Activated CD4-positive, alpha-beta T cell treated with anti-CD3 and anti-CD28 coated beads for 36 hours (primary cell): ENCODE measurements at regions of chr15 and their contacts with region 1.

Region 1: GRCh38 chr15:63504247-63504978 is at the start of gene USP3:
- DNase-seq: peak; percentile 96
- ATAC-seq: peak; percentile 53
- H3K4me3 Mint-ChIP-seq: peak within 1 kb of the TSS; percentile 94
- H3K27ac Mint-ChIP-seq: peak within 1 kb of the TSS; percentile 97
- H3K4me1 Mint-ChIP-seq: peaks cover 74% of the 10 kb centered on the region
- H3K27me3 Mint-ChIP-seq: no peaks in the 10 kb centered on the region
- total RNA-seq, gene USP3: 51.1 to 51.7 TPM

Region 2: GRCh38 chr15:63212050-63213004 is 292.1 kb before region 1 on chr15:
- CTCF ChIA-PET with region 1: no interaction called
- POLR2A ChIA-PET with region 1: no interaction called
- intact Hi-C with region 1: loop called (anchors 1 to 10 kb)
- DNase-seq: peak; percentile 44
- ATAC-seq: peak; percentile 70
- H3K4me3 Mint-ChIP-seq: peak overlapping the region; percentile 53
- H3K27ac Mint-ChIP-seq: peak overlapping the region; percentile 98
- H3K4me1 Mint-ChIP-seq: peaks cover 91% of the 10 kb centered on the region
- H3K27me3 Mint-ChIP-seq: no peaks in the 10 kb centered on the region

Region 3: DNA sequence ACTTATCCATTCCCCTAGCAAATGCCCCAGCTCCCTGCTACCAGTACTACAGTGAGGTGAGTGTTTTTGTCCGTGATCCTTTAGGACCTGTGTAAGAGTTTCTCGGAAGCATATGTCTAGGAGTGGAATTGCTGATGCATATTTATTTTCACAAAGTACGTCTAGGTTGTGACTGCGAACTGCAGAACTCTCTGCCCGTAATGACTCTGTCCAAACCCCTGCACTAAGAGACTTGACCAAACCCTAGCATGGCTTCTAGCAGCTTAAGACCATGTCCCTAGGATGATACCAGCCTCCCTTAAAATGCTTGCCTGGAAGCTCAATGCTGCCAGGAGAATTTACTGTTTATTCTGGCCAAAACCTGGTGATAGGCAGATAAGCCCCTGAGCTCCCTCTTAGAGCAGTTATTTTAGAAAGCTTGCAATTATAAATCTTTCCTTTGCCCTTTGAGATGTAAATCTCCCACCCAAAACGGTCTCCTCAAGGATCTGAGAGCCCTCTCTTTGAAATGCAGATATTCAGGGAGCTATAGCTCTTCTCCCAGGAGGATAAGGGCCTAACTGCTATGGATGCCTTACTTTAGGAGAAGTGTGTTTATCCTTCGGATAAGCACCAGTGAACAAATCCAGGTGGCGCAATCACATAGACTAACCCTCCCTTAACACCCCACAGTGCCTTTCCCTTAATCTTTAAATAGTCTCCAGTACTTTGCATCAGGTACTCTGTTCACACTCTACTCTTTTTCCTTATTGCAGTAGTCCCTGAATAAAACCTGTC is 108.1 kb before region 1 on chr15:
- CTCF ChIA-PET with region 1: no interaction called
- POLR2A ChIA-PET with region 1: no interaction called
- intact Hi-C with region 1: no loop called
- DNase-seq: no peak
- ATAC-seq: no peak
- H3K4me3 Mint-ChIP-seq: no peak overlapping the region
- H3K27ac Mint-ChIP-seq: no peak overlapping the region
- H3K4me1 Mint-ChIP-seq: peaks cover 32% of the 10 kb centered on the region
- H3K27me3 Mint-ChIP-seq: peaks cover 25% of the 10 kb centered on the region

Region 4: GRCh38 chr15:63473999-63474809 is 30.2 kb before region 1 on chr15:
- CTCF ChIA-PET with region 1: interaction called, 78 read pairs
- POLR2A ChIA-PET with region 1: interaction called, 5 read pairs
- intact Hi-C with region 1: loop called (anchors 1 kb)
- DNase-seq: peak; percentile 84
- ATAC-seq: peak; percentile 79
- H3K4me3 Mint-ChIP-seq: peak overlapping the region; percentile 9
- H3K27ac Mint-ChIP-seq: peak overlapping the region; percentile 94
- H3K4me1 Mint-ChIP-seq: peaks cover 59% of the 10 kb centered on the region
- H3K27me3 Mint-ChIP-seq: no peaks in the 10 kb centered on the region

Region 5: GRCh38 chr15:63522225-63522578 is 17.8 kb after region 1 on chr15:
- CTCF ChIA-PET with region 1: interaction called, 10 read pairs
- POLR2A ChIA-PET with region 1: interaction called, 4 read pairs
- intact Hi-C with region 1: no loop called
- DNase-seq: no peak
- ATAC-seq: no peak
- H3K4me3 Mint-ChIP-seq: no peak overlapping the region
- H3K27ac Mint-ChIP-seq: no peak overlapping the region
- H3K4me1 Mint-ChIP-seq: peaks cover 94% of the 10 kb centered on the region
- H3K27me3 Mint-ChIP-seq: no peaks in the 10 kb centered on the region

Region 6: GRCh38 chr15:63600616-63601025 is 96.2 kb after region 1 on chr15:
- CTCF ChIA-PET with region 1: interaction called, 9 read pairs
- POLR2A ChIA-PET with region 1: interaction called, 15 read pairs
- intact Hi-C with region 1: loop called (anchors 1 to 2 kb)
- DNase-seq: peak; percentile 95
- ATAC-seq: peak; percentile 74
- H3K4me3 Mint-ChIP-seq: peak overlapping the region; percentile 88
- H3K27ac Mint-ChIP-seq: peak overlapping the region; percentile 96
- H3K4me1 Mint-ChIP-seq: peaks cover 54% of the 10 kb centered on the region
- H3K27me3 Mint-ChIP-seq: no peaks in the 10 kb centered on the region

Region 7: GRCh38 chr15:64093627-64094417 is 589.4 kb after region 1 on chr15 and contains the start of gene CIAO2A:
- CTCF ChIA-PET with region 1: no interaction called
- POLR2A ChIA-PET with region 1: no interaction called
- intact Hi-C with region 1: loop called (anchors 1 to 10 kb)
- DNase-seq: peak; percentile 97
- ATAC-seq: peak; percentile 87
- H3K4me3 Mint-ChIP-seq: peak within 1 kb of the TSS; percentile 91
- H3K27ac Mint-ChIP-seq: peak within 1 kb of the TSS; percentile 96
- H3K4me1 Mint-ChIP-seq: peaks cover 49% of the 10 kb centered on the region
- H3K27me3 Mint-ChIP-seq: no peaks in the 10 kb centered on the region
- total RNA-seq, gene CIAO2A: 95.5 to 111 TPM